ENCODE measurements at regions of chr4 and their contacts with region 1.

Region 1: DNA sequence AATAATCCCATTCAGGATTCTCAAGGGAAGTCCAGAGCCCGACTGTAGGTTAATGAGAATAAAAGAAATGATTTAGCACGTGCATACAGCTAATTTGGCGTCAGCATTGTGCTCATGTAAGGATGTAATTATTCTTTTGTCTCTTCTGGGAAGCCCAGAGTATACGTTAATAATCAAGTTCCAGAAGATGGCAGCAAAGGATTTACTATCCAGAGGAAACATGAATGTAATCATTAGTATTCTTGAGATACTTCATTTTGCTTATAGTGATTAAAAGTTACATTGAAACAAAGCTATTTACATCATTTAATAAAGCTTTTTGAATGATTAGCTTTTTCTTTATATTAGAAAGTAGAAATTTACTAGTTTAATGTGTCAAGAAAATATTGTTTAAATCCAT is 27.1 kb upstream of the MAP9 start:
- DNase-seq: no peak
- ATAC-seq: peak in 3 of 4 donors; percentile 29 to 76 (median 64)
- H3K4me3 ChIP-seq: no peak overlapping the region
- H3K27ac ChIP-seq: no peak overlapping the region
- H3K4me1 ChIP-seq: no peaks in the 10 kb centered on the region
- H3K27me3 ChIP-seq: no peaks in the 10 kb centered on the region
- CTCF ChIP-seq: peak in 11 of 12 donors; percentile 24 to 68 (median 54)
- POLR2A ChIP-seq: no peak

Region 2: DNA sequence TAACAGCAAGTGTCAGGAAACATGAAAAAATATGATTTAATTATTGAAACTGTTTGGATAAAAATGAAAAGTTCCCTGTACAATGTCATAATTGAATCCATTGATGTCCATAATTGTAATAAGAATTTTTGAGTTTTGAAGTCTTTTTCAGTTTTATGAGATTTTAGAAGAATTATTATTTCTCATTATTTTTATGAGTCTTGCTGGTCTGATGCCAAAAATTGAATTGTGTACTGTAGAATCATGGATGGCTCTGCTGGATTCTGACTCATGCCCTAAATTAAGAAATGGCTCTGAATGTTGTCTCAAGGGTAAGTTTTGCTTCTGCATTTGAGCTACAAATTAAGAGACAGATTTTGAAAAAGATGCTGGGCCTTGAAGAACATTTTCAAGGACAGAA is 105.7 kb after region 1 on chr4:
- intact Hi-C with region 1: no loop called
- DNase-seq: no peak
- ATAC-seq: peak in 3 of 4 donors; percentile 49 to 79 (median 62)
- H3K4me3 ChIP-seq: no peak overlapping the region
- H3K27ac ChIP-seq: peak overlapping the region in 11 of 12 donors; percentile 5 to 75 (median 57)
- H3K4me1 ChIP-seq: peaks cover 0 to 77% (median 39%) of the 10 kb centered on the region in 12 donors
- H3K27me3 ChIP-seq: no peaks in the 10 kb centered on the region
- CTCF ChIP-seq: no peak
- POLR2A ChIP-seq: no peak

Region 3: DNA sequence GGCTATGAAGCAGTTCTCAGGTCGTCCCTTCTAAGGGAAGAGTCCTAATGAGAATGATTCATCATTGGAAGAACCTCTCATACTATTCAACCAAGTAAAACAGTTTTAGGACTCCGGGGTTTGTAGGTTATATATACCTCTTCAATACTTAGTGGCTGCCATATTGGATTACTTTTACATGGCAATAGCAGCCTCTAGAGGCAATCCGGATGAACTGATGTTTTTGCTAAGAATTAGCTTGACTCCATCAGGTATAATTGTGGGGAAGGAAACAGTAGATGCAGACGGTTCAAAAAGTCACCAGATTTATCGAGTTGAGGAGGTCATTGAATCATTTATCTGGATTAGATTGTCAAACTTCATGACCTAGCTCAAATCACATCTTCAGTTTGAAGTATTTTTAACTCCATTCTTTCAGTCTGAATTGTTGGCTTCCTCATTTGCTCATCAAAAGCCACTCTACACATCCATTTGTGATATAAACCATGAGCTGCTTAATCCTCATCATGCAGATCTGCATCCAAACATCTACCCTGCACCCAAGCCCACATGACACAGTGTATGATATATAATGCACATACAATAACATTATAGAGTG is 383.3 kb after region 1 on chr4:
- intact Hi-C with region 1: loop called in 9 of 10 experiments (anchors 1 to 10 kb)
- DNase-seq: no peak
- ATAC-seq: peak; percentile 38 to 91 (median 86)
- H3K4me3 ChIP-seq: no peak overlapping the region
- H3K27ac ChIP-seq: no peak overlapping the region
- H3K4me1 ChIP-seq: peaks cover 0 to 40% (median 7%) of the 10 kb centered on the region in 12 donors
- H3K27me3 ChIP-seq: no peaks in the 10 kb centered on the region
- CTCF ChIP-seq: peak; percentile 54 to 88 (median 76)
- POLR2A ChIP-seq: no peak

Region 4: DNA sequence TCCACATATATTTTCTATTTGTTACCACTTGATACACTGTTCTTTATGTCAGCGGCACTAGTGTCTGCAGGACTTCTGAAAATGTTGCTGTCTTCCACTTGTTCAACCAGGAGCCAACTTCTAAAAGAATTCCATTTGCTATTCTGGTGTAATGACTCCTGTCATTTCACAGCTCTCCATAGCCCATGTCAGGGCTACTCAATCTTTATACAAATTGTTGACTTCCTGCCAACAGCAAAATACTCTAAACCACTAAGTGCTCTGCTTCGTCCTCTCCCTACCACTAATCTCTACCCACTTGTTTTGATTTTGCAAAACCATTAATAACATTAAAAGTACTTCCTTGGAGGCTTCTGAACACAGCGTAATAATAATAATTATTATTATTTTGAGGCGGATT is 542.6 kb after region 1 on chr4:
- intact Hi-C with region 1: loop called in 9 of 10 experiments (anchors 5 to 10 kb)
- DNase-seq: no peak
- ATAC-seq: peak in 3 of 4 donors; percentile 50 to 54 (median 51)
- H3K4me3 ChIP-seq: no peak overlapping the region
- H3K27ac ChIP-seq: no peak overlapping the region
- H3K4me1 ChIP-seq: peaks cover 0 to under 1% (median 0%) of the 10 kb centered on the region in 12 donors
- H3K27me3 ChIP-seq: no peaks in the 10 kb centered on the region
- CTCF ChIP-seq: no peak
- POLR2A ChIP-seq: no peak

Region 5: DNA sequence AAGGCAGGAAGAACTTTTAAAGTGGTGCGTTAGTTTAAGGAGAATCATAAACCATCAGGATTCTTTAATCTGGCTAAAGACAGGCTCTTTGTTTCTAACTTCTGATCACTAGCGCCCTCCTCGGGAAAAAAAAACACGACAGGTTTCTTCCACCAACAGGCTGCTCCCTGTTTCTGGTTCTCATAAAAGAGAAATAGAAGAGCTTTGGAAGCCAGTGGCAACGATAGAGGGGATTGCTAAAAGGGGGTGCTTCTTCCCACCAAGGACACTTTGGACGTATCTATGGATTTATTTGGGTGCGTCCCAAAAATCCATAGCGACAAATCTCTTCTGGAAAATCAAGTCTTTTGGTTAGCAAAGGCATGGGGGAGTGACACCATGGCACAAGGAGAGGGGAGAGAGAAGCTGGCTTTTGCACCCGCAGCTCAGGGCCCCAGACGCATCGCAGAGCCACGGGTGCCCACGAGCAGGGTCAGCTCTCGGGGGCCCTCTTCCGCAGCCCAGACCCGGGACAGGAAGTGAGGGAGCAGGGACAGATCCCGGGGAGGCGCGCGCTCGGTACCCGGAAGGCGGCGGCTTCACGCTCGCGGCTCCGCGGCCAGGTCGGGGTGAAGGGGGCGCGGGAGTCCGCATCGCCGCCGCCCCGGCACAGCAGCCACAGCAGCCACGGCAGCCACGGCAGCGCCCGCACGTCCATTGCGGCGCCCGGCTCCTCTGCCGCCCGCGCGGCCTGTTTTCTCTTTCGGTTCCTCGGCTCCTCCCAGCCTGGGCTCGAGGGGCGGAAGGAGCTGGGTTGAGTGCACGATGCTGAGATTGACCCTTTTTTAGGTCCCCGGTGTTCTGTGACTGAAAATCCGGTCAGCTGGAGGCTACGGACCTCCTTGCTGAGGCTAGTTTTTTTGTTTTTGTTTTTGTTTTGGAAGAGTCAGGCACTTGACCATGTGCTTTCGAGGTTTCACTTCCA is 549.5 kb after region 1 on chr4 and contains the start of gene CTSO:
- intact Hi-C with region 1: loop called (anchors 2 to 10 kb)
- DNase-seq: peak; percentile 73 to 88 (median 85)
- ATAC-seq: peak; percentile 82 to 98 (median 96)
- H3K4me3 ChIP-seq: peak within 1 kb of the TSS; percentile 62 to 95 (median 82)
- H3K27ac ChIP-seq: peak within 1 kb of the TSS; percentile 90 to 99 (median 98)
- H3K4me1 ChIP-seq: peaks cover 0 to 17% (median 2%) of the 10 kb centered on the region in 12 donors
- H3K27me3 ChIP-seq: no peaks in the 10 kb centered on the region
- CTCF ChIP-seq: peak; percentile 35 to 75 (median 64)
- POLR2A ChIP-seq: peak in 1 of 2 donors; percentile 54
- total RNA-seq, gene CTSO: 3.9 to 26.0 (median 9.6) TPM

Measured in heart left ventricle (tissue), 16 donors.